Lower lobe of right lung (tissue), 2 donors: ENCODE measurements at regions of chr15 and their contacts with region 1.

Region 1: DNA sequence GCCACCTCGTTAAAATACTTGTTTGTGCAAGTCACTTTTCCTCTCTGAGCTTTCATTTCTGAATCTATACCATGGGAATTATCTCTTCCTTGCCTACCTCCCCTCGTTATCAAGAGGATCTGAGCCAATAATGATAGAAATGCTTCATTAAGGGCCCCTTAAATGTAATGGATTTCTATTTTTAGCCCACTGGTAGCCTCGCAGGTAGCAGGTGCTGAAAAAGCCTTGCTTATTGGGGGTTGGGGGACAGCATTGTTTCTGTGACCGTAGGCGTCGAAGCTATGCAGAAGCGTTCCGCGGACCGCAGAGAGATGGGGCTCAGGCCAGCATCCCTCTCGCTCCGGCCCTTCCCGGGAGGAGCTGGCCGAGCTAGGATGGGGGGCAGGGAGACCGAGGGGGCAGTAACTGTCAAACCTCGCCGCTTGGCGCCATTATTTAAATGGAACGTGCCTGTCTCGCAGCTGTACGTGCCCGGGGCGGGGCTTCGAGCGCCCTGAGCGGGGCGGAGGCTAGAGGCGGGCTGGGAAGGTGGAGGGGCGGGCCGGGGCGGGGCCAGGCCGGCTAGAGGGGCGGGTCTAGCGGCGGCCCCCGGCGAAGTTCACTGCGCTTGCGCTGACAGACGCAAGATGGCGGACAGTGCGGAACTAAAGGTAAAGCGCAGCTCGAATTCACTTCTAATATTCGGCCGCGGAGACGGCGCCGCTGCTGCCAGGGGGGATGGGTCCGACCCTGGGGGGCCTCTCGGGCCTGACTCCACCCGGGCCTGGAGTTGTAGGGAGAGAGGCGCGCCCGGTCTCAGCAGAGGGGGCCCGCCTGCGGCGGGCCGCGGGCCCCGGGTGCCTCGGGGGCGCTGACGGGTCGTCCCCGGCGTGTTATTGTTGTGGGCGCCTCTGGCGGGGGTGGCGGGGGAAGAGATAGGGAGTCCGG is at the start of gene PIAS1:
- DNase-seq: peak; percentile 98
- ATAC-seq: peak; percentile 98 to 99
- H3K4me3 ChIP-seq: peak within 1 kb of the TSS; percentile 91
- H3K27ac ChIP-seq: peak within 1 kb of the TSS; percentile 94
- H3K4me1 ChIP-seq: peaks cover 37% of the 10 kb centered on the region
- H3K27me3 ChIP-seq: no peaks in the 10 kb centered on the region
- CTCF ChIP-seq: no peak
- total RNA-seq, gene PIAS1: 73.1 TPM

Region 2: DNA sequence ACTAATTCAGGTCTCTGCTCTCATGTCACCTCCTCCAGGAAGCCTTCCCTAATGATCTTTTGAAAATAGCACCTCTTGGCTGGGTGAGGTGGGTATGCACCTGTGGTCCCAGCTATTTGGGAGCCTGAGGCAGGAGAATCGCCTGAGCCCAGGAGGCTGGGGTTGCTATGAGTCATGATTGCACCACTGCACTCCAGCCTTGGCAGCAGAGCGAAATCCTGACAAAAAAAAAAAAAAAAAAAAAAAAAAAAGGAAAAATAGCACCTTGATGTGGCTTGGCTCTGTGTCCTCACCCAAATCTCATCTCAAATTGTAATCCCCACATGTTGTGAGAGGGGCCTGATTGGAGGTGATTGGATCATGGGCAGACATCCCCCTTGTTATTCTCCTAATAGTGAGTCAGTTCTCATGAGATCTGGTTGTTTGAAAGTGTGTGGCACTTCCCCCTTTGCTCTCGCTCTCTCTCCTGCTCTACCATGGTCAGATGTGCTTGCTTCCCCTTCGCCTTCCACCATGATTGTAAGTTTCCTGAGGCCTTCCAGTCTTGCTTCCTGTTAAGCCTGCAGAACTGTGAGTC is 202.9 kb before region 1 on chr15:
- intact Hi-C with region 1: loop called (anchors 10 kb)
- DNase-seq: peak; percentile 66
- ATAC-seq: peak; percentile 82 to 90
- H3K4me3 ChIP-seq: no peak overlapping the region
- H3K27ac ChIP-seq: no peak overlapping the region
- H3K4me1 ChIP-seq: no peaks in the 10 kb centered on the region
- H3K27me3 ChIP-seq: no peaks in the 10 kb centered on the region
- CTCF ChIP-seq: no peak

Region 3: GRCh38 chr15:68566377-68566954 is 512.5 kb after region 1 on chr15:
- intact Hi-C with region 1: no loop called
- DNase-seq: no peak
- ATAC-seq: no peak
- H3K4me3 ChIP-seq: no peak overlapping the region
- H3K27ac ChIP-seq: no peak overlapping the region
- H3K4me1 ChIP-seq: no peaks in the 10 kb centered on the region
- H3K27me3 ChIP-seq: peaks cover 15% of the 10 kb centered on the region
- CTCF ChIP-seq: no peak